Dendritic cell treated with granulocyte-macrophage colony-stimulating factor and Interleukin-4, amounts not matched to agents 40 ng/mL and 50 ng/mL, for 4 days (primary cell): ENCODE measurements at regions of chr3 and their contacts with region 1.

Region 1: GRCh38 chr3:150408221-150409102 is at the start of gene TSC22D2:
- H3K4me3 Mint-ChIP-seq: peak within 1 kb of the TSS; percentile 98
- H3K27ac Mint-ChIP-seq: peak within 1 kb of the TSS; percentile 98
- H3K4me1 Mint-ChIP-seq: peaks cover 13% of the 10 kb centered on the region
- H3K27me3 Mint-ChIP-seq: no peaks in the 10 kb centered on the region

Region 2: GRCh38 chr3:150286390-150287147 is 121.9 kb before region 1 on chr3:
- intact Hi-C with region 1: loop called (anchors 10 kb)
- H3K4me3 Mint-ChIP-seq: no peak overlapping the region
- H3K27ac Mint-ChIP-seq: no peak overlapping the region
- H3K4me1 Mint-ChIP-seq: no peaks in the 10 kb centered on the region
- H3K27me3 Mint-ChIP-seq: peaks cover 3% of the 10 kb centered on the region

Region 3: GRCh38 chr3:150384296-150385212 is 23.9 kb before region 1 on chr3:
- intact Hi-C with region 1: loop called (anchors 2 kb)
- H3K4me3 Mint-ChIP-seq: peak overlapping the region; percentile 71
- H3K27ac Mint-ChIP-seq: peak overlapping the region; percentile 79
- H3K4me1 Mint-ChIP-seq: peaks cover 17% of the 10 kb centered on the region
- H3K27me3 Mint-ChIP-seq: no peaks in the 10 kb centered on the region

Region 4: GRCh38 chr3:150449169-150449721 is 40.8 kb after region 1 on chr3:
- intact Hi-C with region 1: loop called (anchors 5 kb)
- H3K4me3 Mint-ChIP-seq: no peak overlapping the region
- H3K27ac Mint-ChIP-seq: no peak overlapping the region
- H3K4me1 Mint-ChIP-seq: peaks cover 29% of the 10 kb centered on the region
- H3K27me3 Mint-ChIP-seq: no peaks in the 10 kb centered on the region

Region 5: DNA sequence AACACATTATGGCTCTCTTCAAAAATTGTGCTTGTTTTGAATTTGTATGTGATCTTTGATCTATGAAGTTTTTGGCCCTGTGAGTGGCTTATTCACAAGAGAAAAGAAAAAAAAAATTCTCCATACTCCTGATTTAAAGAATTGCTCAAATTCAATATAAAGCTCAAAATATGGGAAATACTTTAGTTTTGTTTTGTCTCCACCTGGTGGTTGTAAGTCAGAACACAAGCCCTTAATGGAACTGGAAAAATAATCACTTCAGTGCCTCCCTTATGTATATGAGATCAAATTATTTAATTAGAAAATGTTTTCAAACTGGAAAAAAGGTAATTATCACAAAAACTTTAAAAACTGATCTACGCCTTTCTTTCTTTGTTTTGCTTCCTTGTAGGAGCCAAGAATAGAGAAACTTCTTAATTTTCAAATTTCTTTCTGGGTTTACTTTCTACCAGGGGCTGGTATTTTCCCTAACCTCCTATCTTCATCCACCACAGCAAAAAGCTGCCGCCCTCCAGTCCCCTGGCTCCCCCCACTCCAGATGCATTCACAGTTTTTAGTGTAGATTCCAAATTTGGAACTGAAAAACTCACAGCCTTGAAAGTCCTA is 87.2 kb after region 1 on chr3:
- intact Hi-C with region 1: loop called (anchors 2 kb)
- H3K4me3 Mint-ChIP-seq: no peak overlapping the region
- H3K27ac Mint-ChIP-seq: no peak overlapping the region
- H3K4me1 Mint-ChIP-seq: peaks cover 16% of the 10 kb centered on the region
- H3K27me3 Mint-ChIP-seq: no peaks in the 10 kb centered on the region

Region 6: GRCh38 chr3:150546226-150547044 is 138.0 kb after region 1 on chr3 and contains the starts of genes EIF2A and SERP1:
- intact Hi-C with region 1: loop called (anchors 2 kb)
- H3K4me3 Mint-ChIP-seq: peak within 1 kb of the TSS; percentile 98
- H3K27ac Mint-ChIP-seq: peak within 1 kb of the TSS; percentile 99
- H3K4me1 Mint-ChIP-seq: peaks cover 38% of the 10 kb centered on the region
- H3K27me3 Mint-ChIP-seq: no peaks in the 10 kb centered on the region

Region 7: DNA sequence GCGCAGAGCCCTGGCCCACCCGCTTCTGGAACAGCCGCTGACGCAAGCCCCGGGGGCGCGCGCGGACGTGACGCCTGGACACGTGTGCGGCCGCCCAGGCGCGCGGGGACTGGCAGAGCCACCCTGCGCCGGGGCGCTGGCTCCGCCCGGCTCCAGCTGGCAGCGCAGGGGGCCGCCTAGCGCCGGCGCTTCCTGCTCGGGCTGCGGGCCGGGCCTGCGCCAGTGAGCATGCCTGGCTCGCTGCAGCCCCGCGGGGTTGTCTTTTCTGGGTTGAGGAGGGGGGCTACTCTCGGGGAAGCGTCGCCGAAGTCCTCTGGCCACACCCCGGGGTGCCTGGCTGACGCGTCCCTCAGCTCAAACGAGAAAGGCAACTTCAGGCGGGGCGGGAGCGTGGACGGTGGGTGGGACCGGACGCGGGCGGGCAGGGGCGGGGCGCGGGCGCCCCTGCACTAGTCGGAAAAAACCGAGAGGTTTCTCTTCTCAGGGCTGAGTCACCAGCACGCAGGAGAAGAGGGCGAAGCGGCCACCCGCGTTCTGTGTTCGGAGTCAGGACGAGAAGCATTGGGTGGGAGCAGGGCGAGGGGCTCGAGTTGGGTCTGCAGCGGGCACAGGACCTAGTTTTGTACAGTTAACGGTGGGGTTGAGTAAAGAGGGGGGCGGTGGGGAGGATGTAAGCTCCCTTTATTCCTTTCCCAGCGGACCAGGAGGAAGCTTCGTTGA is 354.8 kb after region 1 on chr3 and contains the start of gene SIAH2:
- intact Hi-C with region 1: loop called (anchors 5 kb)
- H3K4me3 Mint-ChIP-seq: peak within 1 kb of the TSS; percentile 94
- H3K27ac Mint-ChIP-seq: peak within 1 kb of the TSS; percentile 98
- H3K4me1 Mint-ChIP-seq: peaks cover 35% of the 10 kb centered on the region
- H3K27me3 Mint-ChIP-seq: no peaks in the 10 kb centered on the region